ENCODE measurements at regions of chr17 and their contacts with region 1.

Region 1: GRCh38 chr17:39153599-39154051 is 2.2 kb upstream of the PLXDC1 start:
- DNase-seq: peak; percentile 93 to 99 (median 95)

Region 2: DNA sequence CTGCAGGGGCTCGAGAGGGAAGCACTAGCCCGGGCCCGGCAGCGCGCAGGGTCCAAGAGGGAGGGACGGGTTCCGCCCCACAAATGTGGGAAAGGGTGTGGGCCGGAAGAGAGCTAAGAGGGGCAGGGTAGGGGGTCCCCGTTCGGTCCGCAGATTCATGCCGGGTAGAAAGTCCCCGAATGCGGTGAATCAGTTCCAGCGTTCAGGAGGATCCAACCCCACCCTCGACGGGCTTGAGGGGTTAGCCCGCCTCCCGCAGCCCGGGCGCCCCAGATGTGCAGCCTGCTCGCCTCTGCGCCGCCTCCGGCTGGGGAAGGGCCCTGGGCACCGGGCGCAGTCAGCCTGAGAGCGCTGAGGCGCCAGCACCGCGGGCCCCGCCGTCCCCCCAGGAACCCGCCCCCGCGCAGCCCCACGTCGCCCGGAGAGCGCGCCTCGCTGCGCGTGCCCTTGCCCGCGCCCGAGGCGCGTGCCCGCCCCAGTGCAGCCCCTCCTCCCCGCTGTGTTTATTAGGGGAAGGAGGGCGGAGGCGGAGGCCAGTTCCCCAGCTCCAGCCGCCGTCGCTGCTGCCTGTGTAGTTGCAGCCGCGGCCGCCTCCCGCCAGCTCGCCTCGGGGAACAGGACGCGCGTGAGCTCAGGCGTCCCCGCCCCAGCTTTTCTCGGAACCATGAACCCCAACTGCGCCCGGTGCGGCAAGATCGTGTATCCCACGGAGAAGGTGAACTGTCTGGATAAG is 283.9 kb before region 1 on chr17 and contains the start of gene LASP1:
- intact Hi-C with region 1: loop called (anchors 5 kb)
- DNase-seq: peak; percentile 77 to 98 (median 86)

Region 3: GRCh38 chr17:38982858-38983746 is 170.5 kb before region 1 on chr17:
- intact Hi-C with region 1: loop called (anchors 1 kb)
- DNase-seq: peak in 3 of 10 donors; percentile 19 to 40 (median 24)

Region 4: GRCh38 chr17:39066038-39066437 is 87.6 kb before region 1 on chr17:
- intact Hi-C with region 1: loop called (anchors 2 kb)
- DNase-seq: no peak

Region 5: GRCh38 chr17:39199820-39200069 is 46.1 kb after region 1 on chr17:
- intact Hi-C with region 1: loop called (anchors 5 kb)
- DNase-seq: peak; percentile 77 to 96 (median 85)